ENCODE measurements at regions of chr4 and their contacts with region 1.

Region 1: DNA sequence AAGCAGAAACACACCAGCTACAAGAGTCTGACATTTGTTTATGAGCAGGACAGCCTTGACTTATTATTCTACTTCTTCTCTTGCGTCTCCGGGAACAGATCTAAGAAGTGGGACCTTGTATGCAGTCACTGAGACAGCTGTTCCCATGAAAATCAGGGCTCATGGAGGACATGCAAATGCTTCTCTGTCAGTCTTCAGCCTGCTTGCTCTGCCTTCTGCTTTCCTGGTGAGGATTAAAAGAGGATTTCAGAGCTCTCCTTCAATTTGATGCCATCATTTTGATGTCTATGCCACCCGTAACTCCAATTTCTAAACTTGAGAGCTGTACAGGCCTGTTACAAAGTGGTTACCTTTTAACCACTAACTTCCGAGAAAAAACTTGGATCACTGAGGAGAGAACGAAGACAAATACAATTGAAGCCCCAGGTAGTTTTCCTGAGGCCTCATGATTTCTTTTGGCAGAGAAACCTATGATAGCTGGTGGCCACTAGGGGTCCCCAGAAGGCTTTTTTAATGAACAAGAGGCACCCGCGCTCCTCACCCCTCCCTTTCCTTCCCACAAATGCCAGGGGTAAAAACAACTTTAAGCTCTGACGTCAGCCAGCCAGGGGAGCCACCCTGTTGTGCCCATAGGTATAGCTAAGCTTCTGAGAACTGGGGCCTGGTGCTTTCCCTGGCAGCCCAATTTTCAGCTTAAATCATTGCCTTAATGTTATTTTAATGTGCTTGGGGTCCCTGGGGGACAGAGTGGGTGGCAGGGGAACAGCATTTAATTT is 97.0 kb downstream of the DDIT4L start:
- DNase-seq: peak; percentile 84
- H3K4me3 ChIP-seq: no peak overlapping the region
- H3K27ac ChIP-seq: no peak overlapping the region
- H3K4me1 ChIP-seq: no peaks in the 10 kb centered on the region
- H3K27me3 ChIP-seq: no peaks in the 10 kb centered on the region
- CTCF ChIP-seq: peak; percentile 20 to 75 (median 74)
- POLR2A ChIP-seq: no peak

Region 2: DNA sequence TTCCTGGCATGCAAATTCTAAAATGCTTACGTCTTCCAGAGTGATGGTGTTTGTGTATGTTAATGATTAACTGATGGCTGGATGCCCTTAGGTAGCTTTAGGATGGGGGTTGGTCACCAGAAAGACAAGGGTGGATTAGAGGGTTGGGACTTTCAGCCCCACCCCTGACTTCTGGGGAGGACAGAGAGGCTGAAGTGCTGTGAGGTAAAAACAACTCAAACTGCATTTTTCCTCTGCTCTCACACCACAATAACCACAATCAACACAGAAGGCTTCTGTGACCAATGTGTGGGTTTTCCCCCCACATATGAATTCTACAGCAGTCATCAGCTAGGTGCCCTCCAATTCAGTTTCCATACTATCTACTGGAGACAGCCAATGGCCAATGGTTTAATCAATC is 115.7 kb after region 1 on chr4:
- intact Hi-C with region 1: no loop called
- DNase-seq: no peak
- H3K4me3 ChIP-seq: no peak overlapping the region
- H3K27ac ChIP-seq: no peak overlapping the region
- H3K4me1 ChIP-seq: no peaks in the 10 kb centered on the region
- H3K27me3 ChIP-seq: no peaks in the 10 kb centered on the region
- CTCF ChIP-seq: no peak
- POLR2A ChIP-seq: no peak

Region 3: DNA sequence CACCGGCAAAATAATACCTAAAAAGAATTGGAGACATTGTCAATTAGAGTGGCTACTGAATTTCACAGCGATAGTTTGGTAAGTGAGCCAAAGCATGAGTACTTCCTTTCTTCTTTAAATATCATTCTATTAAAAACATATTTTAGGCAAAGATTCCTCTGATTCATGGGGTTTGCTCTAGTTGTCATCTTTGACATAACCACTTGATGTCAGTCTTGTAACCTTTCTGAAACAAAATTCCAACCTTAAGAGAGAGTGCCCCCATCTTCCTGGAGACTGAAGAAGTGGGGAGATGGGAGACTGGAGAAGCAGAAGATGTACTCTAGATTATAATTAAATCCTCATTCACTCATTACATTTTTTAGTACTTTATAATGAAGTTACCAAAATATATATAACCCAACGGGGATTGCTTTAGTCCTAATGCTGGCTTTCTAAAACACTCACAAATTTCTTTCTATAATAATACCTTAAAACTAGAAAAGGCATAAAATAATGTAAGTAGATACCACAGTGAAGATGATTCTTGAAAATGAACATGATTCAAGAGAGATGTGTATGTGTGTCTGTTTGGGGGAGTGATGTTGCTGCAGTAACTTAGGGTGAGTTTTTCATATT is 328.2 kb after region 1 on chr4:
- intact Hi-C with region 1: loop called (anchors 10 kb)
- DNase-seq: no peak
- H3K4me3 ChIP-seq: no peak overlapping the region
- H3K27ac ChIP-seq: no peak overlapping the region
- H3K4me1 ChIP-seq: no peaks in the 10 kb centered on the region
- H3K27me3 ChIP-seq: no peaks in the 10 kb centered on the region
- CTCF ChIP-seq: peak in 3 of 4 experiments; percentile 24 to 53 (median 45)
- POLR2A ChIP-seq: no peak

Region 4: DNA sequence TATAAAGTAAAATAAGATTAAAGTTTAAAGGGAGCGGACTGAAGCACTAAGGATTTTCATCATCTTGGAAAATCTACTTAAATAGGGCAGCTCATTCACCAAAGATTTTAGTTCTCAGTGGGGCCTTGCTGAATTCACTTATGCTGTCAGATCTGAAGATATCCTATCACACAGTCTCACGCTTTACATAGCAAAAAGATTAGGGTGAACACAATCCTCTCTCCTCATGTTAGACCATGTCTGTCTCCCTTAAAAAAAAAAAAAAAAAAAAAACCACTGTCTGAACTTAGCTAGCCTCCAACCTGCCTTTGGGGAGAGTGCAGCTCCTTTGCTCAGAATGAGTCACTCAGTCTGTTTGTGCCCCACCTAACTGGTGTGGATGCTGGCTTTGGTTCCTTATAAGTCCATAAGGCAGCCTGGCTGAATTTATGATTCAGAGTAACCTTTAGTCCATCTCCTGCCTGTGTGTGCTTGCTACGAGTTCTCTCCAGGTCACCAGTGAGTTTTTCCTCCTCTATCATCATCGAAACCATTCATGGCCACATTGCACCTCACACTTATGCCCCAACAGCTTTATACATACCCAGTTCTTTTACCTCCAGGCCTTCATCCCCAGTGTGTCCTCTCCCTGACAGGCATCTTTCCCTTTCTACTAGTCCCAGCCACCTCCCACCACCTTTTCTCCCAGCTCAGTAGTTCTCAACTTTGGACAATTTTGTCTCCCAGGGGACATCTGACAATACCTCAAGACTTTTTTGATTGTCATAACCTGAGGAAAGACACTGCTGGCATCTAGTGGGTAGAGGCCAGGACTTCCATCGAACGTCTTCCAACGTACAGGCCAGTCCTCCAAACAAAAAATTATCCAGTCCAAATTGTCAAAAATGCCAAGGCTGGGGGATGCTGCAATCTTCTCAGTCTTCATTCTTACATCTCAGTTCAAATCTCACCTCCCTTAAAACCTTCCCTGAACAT is 645.2 kb after region 1 on chr4:
- intact Hi-C with region 1: loop called (anchors 10 kb)
- DNase-seq: no peak
- H3K4me3 ChIP-seq: no peak overlapping the region
- H3K27ac ChIP-seq: peak overlapping the region in 1 of 2 donors; percentile 15
- H3K4me1 ChIP-seq: no peaks in the 10 kb centered on the region
- H3K27me3 ChIP-seq: no peaks in the 10 kb centered on the region
- CTCF ChIP-seq: no peak
- POLR2A ChIP-seq: no peak

Region 5: DNA sequence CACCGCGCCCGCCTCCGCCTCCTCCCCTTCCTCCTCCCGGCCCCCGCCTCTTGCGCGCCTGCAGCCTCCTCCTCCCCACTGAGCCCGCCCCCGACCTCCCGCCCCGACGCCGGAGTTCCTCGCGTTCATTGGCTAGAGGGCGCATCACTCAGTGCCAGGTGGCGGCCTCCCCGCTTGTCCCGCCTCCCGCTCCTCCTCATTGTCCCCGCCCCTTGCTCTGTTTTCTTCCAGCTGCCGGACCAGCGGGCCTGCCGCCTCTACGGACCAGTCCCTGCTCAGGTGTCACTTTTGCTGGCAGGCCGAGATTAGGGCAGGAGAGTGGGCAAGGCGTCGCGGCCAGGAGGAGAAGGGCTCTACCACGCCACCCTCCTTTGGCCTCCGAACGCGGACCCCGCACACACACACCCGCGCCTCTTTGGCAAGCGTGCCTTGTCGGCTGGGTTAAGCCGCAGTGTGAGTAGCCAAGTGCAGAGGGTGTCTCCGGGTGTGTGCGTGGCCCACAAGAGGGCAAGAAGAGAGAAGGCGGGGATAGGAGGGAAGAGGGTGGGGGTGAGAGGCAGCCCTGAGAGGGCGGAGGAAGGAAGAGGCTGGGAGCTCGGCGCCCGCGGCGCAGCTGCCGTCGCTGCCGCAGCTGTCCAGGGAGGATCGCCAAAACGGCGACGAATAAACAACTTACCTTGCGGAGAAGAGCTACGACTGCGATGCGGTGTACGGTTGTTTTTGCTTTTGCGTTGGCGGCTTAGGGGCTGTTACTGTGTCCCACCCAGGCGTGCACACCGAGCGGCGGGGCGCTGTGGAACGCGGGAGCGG is 1254.5 kb after region 1 on chr4:
- intact Hi-C with region 1: loop called (anchors 10 kb)
- DNase-seq: peak; percentile 100
- H3K4me3 ChIP-seq: peak overlapping the region; percentile 86 to 89
- H3K27ac ChIP-seq: peak overlapping the region; percentile 91 to 95
- H3K4me1 ChIP-seq: peaks cover 4% of the 10 kb centered on the region
- H3K27me3 ChIP-seq: no peaks in the 10 kb centered on the region
- CTCF ChIP-seq: peak in 3 of 4 experiments; percentile 9 to 23 (median 22)
- POLR2A ChIP-seq: peak; percentile 82

Region 6: DNA sequence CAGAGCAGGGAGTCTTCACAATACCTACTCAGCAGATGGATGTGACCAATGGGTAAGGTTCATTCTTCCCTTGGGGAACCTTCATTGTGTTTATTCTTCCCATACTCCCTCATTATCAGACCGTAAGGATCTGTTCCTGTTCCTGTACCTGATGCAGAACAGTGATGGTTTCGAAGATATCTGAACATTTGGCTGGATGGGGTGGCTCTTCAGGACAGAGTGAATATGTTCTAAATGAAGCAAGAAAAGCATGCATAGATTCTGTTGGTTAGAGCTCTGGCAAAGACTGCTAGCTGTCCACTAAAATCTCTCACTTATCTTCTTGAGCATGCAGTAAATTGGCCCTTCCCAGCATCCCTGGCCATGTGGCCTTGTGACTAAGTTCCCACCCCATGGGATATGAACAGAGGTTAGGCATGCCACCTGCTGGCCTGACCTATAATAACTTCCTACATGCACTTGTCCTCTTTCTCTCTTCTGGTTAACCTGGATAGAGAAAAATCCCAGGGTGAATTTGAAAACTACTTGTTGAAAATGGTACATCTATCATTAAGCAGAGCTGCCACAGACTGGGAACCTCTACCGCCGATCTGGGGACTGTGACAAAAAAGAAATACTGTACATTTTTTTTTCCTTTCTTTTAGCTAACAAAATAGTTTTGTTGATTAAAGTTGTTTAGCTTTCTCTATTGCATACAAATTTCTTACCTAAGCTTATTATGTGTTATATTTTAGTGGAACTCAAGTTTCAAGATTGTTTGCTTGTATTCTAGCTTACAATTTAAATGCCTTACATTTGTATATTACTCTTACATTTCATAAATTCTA is 1637.2 kb after region 1 on chr4:
- intact Hi-C with region 1: loop called (anchors 10 kb)
- DNase-seq: peak; percentile 63
- H3K4me3 ChIP-seq: no peak overlapping the region
- H3K27ac ChIP-seq: no peak overlapping the region
- H3K4me1 ChIP-seq: no peaks in the 10 kb centered on the region
- H3K27me3 ChIP-seq: no peaks in the 10 kb centered on the region
- CTCF ChIP-seq: peak; percentile 30 to 76 (median 61)
- POLR2A ChIP-seq: no peak

Measured in prostate gland (tissue), 2 donors.